Activated CD4-positive, alpha-beta T cell treated with anti-CD3 and anti-CD28 coated beads, Interleukin-2, amount 10 ng/mL, durations not matched to agents 24 days and 14 days (primary cell): ENCODE measurements at regions of chr4 and their contacts with region 1.

Region 1: DNA sequence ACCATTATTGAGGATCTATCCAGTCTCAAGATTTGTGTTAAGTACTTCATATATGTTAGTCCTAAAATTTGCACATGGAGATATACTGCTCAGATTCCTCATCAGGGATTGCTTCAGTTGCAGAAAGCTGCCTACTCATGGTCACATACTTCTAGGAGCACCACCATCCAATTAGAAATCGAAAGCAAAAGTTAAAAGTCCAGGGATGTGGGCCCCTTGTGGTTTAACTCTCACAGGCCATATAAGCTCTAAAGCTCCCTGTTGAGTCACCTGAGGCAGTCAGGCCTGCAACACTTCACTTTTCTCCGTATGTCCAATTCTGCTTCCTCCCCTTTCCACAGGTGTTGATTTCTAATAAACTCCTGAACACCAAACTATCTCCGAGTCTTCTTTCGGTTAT is 84.2 kb downstream of the CNOT6L start:
- DNase-seq: peak; percentile 85
- H3K4me3 Mint-ChIP-seq: peak overlapping the region; percentile 79
- H3K27ac Mint-ChIP-seq: peak overlapping the region; percentile 79
- H3K4me1 Mint-ChIP-seq: peaks cover 55% of the 10 kb centered on the region
- H3K27me3 Mint-ChIP-seq: no peaks in the 10 kb centered on the region

Region 2: GRCh38 chr4:77777135-77777807 is 42.3 kb after region 1 on chr4:
- intact Hi-C with region 1: loop called (anchors 1 kb)
- DNase-seq: no peak
- H3K4me3 Mint-ChIP-seq: no peak overlapping the region
- H3K27ac Mint-ChIP-seq: no peak overlapping the region
- H3K4me1 Mint-ChIP-seq: peaks cover 19% of the 10 kb centered on the region
- H3K27me3 Mint-ChIP-seq: no peaks in the 10 kb centered on the region